Caki2 (cell line): ENCODE measurements at regions of chr7 and their contacts with region 1.

Region 1: DNA sequence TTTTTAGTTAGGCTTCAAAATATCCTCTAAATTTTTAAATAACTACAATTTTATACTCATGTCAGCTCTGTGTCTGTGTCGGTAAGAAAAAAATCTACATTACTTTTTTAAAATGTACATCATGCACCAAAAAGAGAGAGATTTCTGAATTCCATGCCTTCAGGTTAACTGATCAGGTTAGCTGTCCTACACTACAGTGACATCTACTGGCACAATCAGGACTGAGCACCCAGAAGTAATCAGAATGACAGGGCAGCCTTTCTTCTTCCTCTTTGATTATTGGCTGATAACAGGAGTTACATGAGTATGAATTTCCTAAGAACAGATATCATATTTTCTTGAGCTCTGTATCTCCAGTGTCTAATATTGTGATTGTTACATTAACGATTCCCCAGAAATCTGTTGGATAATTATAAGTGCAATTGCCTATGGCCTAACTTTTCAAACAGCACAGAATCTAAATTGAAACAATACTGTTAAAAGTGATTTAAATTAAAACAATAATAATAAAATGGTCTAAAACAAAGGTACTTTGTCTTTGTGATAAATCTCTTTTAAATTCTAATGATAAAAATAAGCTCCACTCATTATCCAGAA is 41.8 kb upstream of the HYCC1 start:
- DNase-seq: peak; percentile 46

Region 2: DNA sequence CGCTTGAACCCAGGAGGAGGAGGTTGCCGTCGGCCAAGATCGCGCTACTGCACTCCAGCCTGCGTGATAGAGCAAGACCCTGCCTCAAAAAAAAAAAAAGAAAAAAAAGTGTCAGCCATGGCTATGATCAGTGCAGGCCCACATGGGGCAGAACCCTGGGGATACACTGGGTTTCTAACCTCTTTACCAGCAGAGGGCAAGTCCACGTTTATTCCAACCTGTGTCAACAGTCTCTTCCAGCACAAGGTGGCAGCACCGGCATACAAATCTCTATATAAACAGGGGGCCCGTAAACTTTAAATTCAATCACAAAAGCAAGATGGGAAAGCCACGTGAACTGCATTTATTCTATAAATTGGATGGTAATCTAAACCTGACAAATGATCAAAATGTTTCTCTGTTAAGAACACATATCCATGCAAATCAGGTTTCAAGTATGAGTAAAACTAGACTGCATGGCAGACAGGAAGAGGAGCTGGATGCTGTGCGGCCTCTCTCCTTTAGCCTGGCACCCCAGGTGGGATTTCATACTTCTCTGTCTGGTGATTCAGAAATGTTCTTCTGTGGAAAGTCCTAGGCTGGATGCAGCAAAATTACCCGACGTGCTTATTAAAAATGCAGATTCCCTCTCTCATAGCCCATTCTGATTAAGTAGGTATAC is 495.7 kb before region 1 on chr7:
- in situ Hi-C with region 1: loop called (anchors 25 kb)
- DNase-seq: peak; percentile 74

Region 3: DNA sequence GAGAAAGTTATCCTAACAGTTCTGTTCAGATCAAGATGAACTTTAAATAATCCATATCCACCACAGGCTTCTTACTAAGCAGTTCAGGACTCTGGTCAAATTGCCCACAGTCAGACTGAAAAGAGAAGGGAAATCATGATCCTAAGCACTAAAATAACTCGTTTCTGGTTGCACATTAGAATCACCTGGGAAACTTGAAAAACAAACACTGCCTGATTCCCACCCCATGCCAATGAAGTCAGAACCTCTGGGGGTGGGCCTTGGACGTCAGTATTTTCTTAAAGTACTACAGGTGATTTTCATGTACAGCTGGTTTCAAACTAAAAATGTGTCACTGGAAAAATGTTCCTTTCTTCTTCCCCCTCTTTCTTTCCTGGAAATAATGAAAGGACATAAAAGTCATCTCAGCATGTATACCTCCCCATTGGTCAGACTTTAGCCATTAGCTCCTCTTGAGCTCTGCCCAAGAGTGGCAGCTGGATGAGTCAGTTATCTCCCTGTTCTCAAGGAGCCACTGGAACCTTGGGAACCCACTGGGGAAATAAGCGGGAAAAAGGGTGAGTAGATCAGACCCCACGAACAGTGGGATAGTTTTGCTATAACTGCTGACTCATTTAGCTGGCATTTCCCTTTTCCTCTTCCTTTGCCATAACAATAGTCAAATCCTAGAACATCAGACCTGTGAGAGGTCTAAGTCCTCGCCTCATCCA is 404.0 kb before region 1 on chr7:
- in situ Hi-C with region 1: no loop called
- DNase-seq: no peak

Region 4: GRCh38 chr7:22980422-22980821 is 75.3 kb before region 1 on chr7:
- in situ Hi-C with region 1: no loop called
- DNase-seq: no peak

Region 5: GRCh38 chr7:23907012-23907411 is 851.3 kb after region 1 on chr7:
- in situ Hi-C with region 1: no loop called
- DNase-seq: no peak